Mammary epithelial cell (primary cell): ENCODE measurements at regions of chr19 and their contacts with region 1.

Region 1: DNA sequence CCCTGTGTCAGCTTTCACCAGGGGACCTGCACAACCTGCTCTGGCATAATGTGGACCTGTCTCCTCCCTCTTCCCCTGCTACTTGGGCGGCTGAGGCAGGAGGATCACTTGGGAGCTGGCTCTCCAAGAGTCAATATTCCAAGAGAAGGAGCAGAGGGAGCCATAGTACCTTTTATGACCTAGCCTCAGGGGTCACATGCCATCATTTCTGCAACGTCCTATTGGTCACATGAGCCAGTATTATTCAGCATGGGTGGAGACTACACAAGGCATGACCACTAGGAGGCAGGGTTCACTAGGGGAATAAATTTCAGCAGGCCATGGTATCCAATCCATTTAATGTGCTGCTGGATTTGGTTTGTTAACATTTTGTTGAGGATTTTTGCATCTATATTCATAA is 12.0 kb upstream of the SHFL start:
- DNase-seq: peak; percentile 27
- H3K4me3 ChIP-seq: no peak overlapping the region
- H3K27ac ChIP-seq: no peak overlapping the region
- H3K4me1 ChIP-seq: no peaks in the 10 kb centered on the region
- H3K27me3 ChIP-seq: peaks cover 2% of the 10 kb centered on the region
- CTCF ChIP-seq: peak; percentile 28 to 48

Region 2: DNA sequence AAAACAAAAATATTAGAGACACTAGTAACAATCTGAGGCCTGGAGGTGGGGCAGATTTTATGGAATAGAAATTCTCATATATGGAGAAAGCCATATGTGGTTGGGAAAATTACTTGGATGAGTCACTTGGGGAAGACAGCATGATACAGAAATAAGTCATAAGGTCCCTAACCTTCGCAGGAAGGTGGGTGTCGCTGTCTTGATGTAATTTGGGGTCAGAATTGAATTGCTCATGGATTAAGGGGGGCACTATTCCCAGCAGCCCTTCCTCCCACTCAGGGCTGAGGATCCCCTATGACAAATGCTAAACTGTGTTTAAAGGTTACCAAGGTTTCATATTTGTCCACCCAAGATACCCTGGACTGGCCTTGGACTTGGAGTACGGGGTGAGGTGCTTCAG is 55.9 kb before region 1 on chr19:
- CTCF ChIA-PET with region 1: no interaction called
- dilution Hi-C with region 1: loop called (anchors 5 kb)
- in situ Hi-C with region 1: no loop called
- intact Hi-C with region 1: no loop called
- DNase-seq: peak; percentile 63
- H3K4me3 ChIP-seq: no peak overlapping the region
- H3K27ac ChIP-seq: no peak overlapping the region
- H3K4me1 ChIP-seq: peaks cover 6% of the 10 kb centered on the region
- H3K27me3 ChIP-seq: no peaks in the 10 kb centered on the region
- CTCF ChIP-seq: no peak

Region 3: DNA sequence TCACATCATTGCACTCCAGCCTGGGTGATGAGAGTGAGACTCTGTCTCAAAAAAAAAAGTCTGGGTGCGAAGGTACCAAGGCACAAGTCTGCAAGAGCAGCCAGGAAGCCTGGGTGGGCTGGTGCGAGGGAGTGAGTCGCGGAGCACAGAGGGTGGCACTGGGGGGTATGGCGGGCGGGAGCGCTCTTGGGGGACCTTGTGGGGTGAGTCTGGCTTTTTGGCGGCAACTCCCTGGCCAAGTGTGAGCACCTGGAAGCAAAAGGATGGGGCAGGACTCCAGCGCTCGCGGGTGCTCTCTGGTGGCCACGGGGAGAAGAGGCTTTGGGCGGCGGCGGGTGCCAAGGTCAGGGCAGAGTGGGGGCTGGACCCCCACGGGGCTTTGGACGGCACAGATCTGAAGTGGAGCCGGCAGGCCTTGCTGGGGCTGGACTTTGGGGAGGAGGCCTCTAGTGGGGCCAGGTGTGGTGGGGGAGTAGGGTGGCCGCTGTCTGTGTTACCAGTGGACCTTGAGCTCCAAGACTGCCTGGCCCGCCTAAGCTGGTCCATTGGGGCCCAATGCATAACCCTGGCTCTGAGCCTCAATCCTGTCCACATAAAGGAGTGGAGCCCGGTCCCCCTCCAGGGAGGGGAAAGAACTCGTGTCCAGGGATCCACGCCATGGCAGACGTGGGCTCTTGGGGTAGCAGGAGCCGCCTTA is 38.9 kb after region 1 on chr19:
- CTCF ChIA-PET with region 1: no interaction called
- dilution Hi-C with region 1: no loop called
- in situ Hi-C with region 1: no loop called
- intact Hi-C with region 1: loop called (anchors 1 kb)
- DNase-seq: no peak
- H3K4me3 ChIP-seq: no peak overlapping the region
- H3K27ac ChIP-seq: no peak overlapping the region
- H3K4me1 ChIP-seq: peaks cover 5% of the 10 kb centered on the region
- H3K27me3 ChIP-seq: no peaks in the 10 kb centered on the region
- CTCF ChIP-seq: peak; percentile 44 to 77

Region 4: DNA sequence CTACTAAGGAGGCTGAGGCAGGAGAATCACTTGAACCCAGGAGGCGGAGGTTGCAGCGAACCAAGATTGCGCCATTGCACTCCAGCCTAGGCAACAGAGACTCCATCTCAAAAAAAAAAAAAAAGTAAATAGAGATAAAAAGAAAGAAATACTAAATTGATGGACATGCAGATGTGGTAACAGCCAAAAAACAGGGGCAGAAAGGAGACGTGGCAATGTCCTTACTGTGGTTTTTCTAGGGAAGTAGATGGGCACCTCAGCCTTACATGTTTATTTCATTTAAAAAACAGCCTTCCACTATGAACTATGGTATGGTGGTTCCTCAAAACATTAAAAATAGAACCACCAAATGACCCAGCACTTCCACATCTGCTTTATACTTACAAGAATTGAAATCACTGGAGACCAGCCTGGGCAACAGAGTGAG is 52.1 kb after region 1 on chr19:
- CTCF ChIA-PET with region 1: no interaction called
- dilution Hi-C with region 1: no loop called
- in situ Hi-C with region 1: no loop called
- intact Hi-C with region 1: no loop called
- DNase-seq: no peak
- H3K4me3 ChIP-seq: no peak overlapping the region
- H3K27ac ChIP-seq: no peak overlapping the region
- H3K4me1 ChIP-seq: no peaks in the 10 kb centered on the region
- H3K27me3 ChIP-seq: no peaks in the 10 kb centered on the region
- CTCF ChIP-seq: no peak

Region 5: DNA sequence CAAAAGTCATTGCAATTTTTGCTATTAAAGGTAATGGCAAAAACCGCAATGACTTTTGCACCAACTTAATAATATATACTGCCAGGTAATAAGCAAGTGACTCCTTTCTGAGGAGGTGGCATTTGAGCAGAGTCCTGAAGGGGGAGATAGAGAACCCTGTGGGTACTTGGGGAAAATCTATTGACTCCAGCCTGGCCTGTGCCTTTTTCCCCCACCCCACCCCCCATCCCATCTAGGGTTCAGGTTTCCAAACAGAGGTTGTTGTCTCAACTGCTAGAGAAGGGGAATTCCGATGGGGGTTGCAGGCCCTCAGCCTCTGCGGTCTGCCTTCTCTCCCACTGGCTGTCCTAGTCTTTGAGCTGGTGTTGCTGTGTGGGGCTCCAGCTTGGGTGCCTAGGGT is 145.5 kb after region 1 on chr19:
- CTCF ChIA-PET with region 1: interaction called, 14 read pairs
- dilution Hi-C with region 1: no loop called
- in situ Hi-C with region 1: no loop called
- intact Hi-C with region 1: no loop called
- DNase-seq: peak; percentile 49
- H3K4me3 ChIP-seq: no peak overlapping the region
- H3K27ac ChIP-seq: no peak overlapping the region
- H3K4me1 ChIP-seq: no peaks in the 10 kb centered on the region
- H3K27me3 ChIP-seq: no peaks in the 10 kb centered on the region
- CTCF ChIP-seq: peak; percentile 40 to 42